ENCODE measurements at regions of chr1 and their contacts with region 1.

Region 1: GRCh38 chr1:157090196-157090647 is 9.4 kb downstream of the ETV3L start:
- ATAC-seq: peak; percentile 95 to 99 (median 98)
- H3K4me3 ChIP-seq: no peak overlapping the region
- H3K27ac ChIP-seq: no peak overlapping the region
- H3K4me1 ChIP-seq: peaks cover 2 to 3% of the 10 kb centered on the region in 2 donors

Region 2: GRCh38 chr1:157147906-157148717 is 57.9 kb after region 1 on chr1:
- in situ Hi-C with region 1: loop called in 3 of 9 experiments (anchors 10 kb)
- ATAC-seq: peak in 1 of 8 experiments; percentile 11
- H3K4me3 ChIP-seq: no peak overlapping the region
- H3K27ac ChIP-seq: no peak overlapping the region
- H3K4me1 ChIP-seq: no peaks in the 10 kb centered on the region

Region 3: GRCh38 chr1:157156058-157156541 is 65.9 kb after region 1 on chr1:
- in situ Hi-C with region 1: loop called in 2 of 9 experiments (anchors 10 kb)
- ATAC-seq: peak; percentile 50 to 90 (median 82)
- H3K4me3 ChIP-seq: no peak overlapping the region
- H3K27ac ChIP-seq: no peak overlapping the region
- H3K4me1 ChIP-seq: peaks cover 5 to 22% of the 10 kb centered on the region in 2 donors

Measured in motor neuron (in vitro differentiated cells).